ENCODE measurements at regions of chr2 and their contacts with region 1.

Region 1: DNA sequence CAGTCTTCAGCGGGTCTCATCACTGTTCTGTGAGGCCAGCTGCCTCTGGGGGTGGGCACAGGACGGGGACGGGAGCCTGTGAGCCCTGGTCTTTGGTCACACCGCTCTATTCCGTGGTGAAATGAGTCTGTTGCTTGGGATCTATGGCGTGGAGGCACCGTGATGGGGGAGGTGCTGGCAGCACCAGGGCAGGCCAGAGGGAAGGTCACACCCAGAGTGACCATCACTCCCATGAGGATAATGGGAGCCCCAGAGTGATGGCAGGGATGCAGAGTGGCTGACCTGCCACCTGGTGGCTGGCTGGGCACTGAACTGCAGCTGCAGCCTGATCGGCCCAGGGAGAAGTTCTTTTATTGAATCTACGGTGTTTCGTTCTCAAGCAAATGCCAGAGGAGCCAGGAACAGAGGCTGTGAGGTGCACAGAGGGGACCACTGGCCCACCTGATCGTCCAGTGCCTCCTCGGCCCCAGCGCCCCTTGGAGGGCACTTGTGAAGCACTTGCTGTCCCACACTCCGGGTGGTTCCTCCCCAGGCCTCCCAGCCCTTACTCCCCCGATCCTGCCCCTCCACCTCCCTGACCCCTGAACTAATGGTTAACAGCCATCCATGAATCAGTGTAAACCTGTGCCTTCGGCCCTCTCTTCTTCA is 17.9 kb downstream of the KCNIP3 start:
- DNase-seq: no peak

Region 2: GRCh38 chr2:95231723-95232122 is 83.4 kb before region 1 on chr2:
- intact Hi-C with region 1: loop called (anchors 2 kb)
- DNase-seq: no peak